MCF 10A (cell line): ENCODE measurements at regions of chr19 and their contacts with region 1.

Region 1: DNA sequence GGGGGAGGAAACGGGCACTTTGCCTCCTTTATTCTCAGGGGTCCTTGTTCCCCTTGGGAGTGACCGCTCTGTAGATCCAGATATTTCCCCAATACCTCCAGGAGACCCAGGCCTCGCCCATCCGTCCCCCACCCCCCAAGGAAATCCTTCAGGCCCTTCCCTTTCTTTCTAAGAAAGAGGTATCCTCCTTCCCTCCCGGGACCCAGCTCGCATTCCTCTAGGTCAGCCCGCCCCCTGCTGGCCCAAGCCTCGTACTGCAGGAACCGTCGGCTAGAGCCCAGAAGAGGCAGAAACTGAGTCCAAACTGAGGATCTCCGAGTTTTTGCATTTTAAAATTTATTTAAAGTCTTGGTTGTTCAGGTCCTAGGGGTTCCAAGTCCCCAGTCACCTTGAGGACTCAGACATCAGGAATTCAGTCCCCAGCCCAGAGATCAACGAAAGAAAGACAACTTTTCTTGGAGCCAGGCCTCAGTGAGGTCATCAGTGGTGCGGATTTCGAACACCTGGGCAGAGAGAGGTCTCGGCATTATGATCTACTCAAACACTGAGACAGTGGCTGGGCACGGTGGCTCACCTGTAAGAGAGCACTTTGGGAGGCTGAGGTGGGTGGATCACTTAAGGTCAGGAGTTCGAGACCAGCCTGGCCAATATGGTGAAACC is 7.5 kb upstream of the LRFN1 start:
- DNase-seq: peak; percentile 80
- H3K4me3 Mint-ChIP-seq: no peak overlapping the region
- H3K27ac Mint-ChIP-seq: no peak overlapping the region
- H3K4me1 Mint-ChIP-seq: no peaks in the 10 kb centered on the region
- H3K27me3 Mint-ChIP-seq: no peaks in the 10 kb centered on the region
- CTCF ChIP-seq: peak; percentile 95

Region 2: DNA sequence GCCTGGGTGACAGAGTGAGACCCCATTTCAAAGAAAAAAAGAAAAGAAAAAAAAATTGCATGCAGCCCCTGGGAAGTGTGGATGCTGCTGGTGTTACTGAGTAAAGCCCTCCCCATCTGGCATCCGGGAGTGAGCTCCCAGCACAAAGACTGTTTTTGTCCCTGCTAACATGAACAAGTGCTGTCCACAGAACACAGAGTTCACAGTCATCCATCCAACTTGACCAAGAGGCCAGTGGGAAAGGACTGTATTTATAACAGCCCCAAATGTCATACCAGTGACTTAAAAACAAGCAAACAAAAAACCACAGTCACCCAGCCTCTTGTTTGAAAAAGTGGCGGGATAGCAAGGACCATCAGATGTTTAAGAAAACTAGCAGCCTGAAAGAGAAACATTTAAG is 363.4 kb before region 1 on chr19:
- CTCF ChIA-PET with region 1: interaction called, 8 read pairs
- POLR2A ChIA-PET with region 1: interaction called, 3 read pairs
- intact Hi-C with region 1: loop called (anchors 1 kb)
- DNase-seq: no peak
- H3K4me3 Mint-ChIP-seq: no peak overlapping the region
- H3K27ac Mint-ChIP-seq: no peak overlapping the region
- H3K4me1 Mint-ChIP-seq: peaks cover 5% of the 10 kb centered on the region
- H3K27me3 Mint-ChIP-seq: no peaks in the 10 kb centered on the region
- CTCF ChIP-seq: no peak

Region 3: GRCh38 chr19:39052243-39052746 is 275.9 kb before region 1 on chr19:
- CTCF ChIA-PET with region 1: interaction called, 3 read pairs
- POLR2A ChIA-PET with region 1: no interaction called
- intact Hi-C with region 1: loop called (anchors 1 kb)
- DNase-seq: peak; percentile 62
- H3K4me3 Mint-ChIP-seq: no peak overlapping the region
- H3K27ac Mint-ChIP-seq: no peak overlapping the region
- H3K4me1 Mint-ChIP-seq: no peaks in the 10 kb centered on the region
- H3K27me3 Mint-ChIP-seq: no peaks in the 10 kb centered on the region
- CTCF ChIP-seq: peak; percentile 90

Region 4: DNA sequence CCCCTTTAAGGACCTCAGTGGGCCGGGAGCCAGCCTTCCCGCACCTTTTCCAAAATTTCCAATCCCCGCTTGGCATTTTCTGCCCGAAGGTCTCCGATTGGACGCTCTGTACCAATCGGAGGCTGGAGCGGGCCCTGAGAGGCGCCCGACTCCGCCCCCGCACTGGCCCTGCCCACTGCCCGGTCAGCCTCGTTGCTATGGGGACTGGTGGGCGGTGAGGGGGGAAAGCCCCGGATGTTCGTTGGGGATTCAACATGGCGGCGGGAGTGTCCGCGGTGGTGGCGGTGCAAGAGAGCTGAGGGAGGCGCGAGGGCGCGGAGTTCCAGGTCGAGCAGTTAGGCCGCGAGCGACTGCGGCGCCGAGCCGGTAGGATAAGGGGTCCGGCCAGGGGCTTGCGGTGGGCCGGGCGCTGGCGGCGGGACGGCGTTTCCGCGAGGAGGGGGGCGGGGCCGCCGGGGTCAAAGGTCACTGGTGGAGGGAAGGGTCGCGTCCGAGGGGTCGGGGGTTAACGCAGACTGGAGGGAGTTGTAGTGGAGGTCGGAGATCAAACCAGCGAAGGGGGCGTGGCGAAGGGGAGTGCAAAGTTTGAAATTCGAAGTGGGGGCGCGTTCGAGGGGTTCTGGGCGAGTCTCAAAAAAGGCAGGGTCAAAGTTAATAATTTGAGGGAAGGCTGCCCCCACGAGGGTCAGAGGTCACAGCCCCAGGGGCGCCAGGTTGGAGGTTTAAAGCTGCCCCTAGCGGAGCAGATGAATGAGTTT is 202.4 kb before region 1 on chr19 and contains the start of gene PAK4:
- CTCF ChIA-PET with region 1: interaction called, 50 read pairs
- POLR2A ChIA-PET with region 1: interaction called, 8 read pairs
- intact Hi-C with region 1: loop called (anchors 1 kb)
- DNase-seq: peak; percentile 99
- H3K4me3 Mint-ChIP-seq: peak within 1 kb of the TSS; percentile 87
- H3K27ac Mint-ChIP-seq: peak within 1 kb of the TSS; percentile 89
- H3K4me1 Mint-ChIP-seq: peaks cover 24% of the 10 kb centered on the region
- H3K27me3 Mint-ChIP-seq: no peaks in the 10 kb centered on the region
- CTCF ChIP-seq: no peak
- total RNA-seq, gene PAK4: 28.4 and 29.5 TPM in 2 replicates

Region 5: GRCh38 chr19:39199025-39199424 is 129.2 kb before region 1 on chr19:
- CTCF ChIA-PET with region 1: no interaction called
- POLR2A ChIA-PET with region 1: no interaction called
- intact Hi-C with region 1: loop called (anchors 10 kb)
- DNase-seq: no peak
- H3K4me3 Mint-ChIP-seq: no peak overlapping the region
- H3K27ac Mint-ChIP-seq: no peak overlapping the region
- H3K4me1 Mint-ChIP-seq: peaks cover 17% of the 10 kb centered on the region
- H3K27me3 Mint-ChIP-seq: peaks cover 62% of the 10 kb centered on the region
- CTCF ChIP-seq: no peak

Region 6: DNA sequence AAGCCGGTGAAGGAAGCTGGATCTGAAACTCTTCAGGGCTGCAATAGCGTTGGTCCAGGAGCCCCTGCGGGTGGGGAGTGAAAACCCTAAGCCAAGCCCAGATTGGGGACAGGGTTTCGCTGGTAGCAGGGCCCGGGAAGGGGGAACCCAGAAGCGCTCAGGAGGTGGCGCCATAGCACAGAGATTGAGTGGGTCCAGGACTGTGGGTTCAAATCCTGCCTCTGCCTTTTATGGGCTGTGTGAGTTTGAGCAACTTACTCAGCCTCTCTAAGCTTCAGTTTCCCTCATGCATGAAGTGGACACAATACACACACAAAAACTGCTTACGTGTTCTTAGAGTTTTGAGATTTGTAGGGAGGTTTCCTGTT is 115.8 kb before region 1 on chr19:
- CTCF ChIA-PET with region 1: interaction called, 3 read pairs
- POLR2A ChIA-PET with region 1: no interaction called
- intact Hi-C with region 1: loop called (anchors 1 kb)
- DNase-seq: peak; percentile 34
- H3K4me3 Mint-ChIP-seq: no peak overlapping the region
- H3K27ac Mint-ChIP-seq: no peak overlapping the region
- H3K4me1 Mint-ChIP-seq: no peaks in the 10 kb centered on the region
- H3K27me3 Mint-ChIP-seq: no peaks in the 10 kb centered on the region
- CTCF ChIP-seq: no peak

Region 7: DNA sequence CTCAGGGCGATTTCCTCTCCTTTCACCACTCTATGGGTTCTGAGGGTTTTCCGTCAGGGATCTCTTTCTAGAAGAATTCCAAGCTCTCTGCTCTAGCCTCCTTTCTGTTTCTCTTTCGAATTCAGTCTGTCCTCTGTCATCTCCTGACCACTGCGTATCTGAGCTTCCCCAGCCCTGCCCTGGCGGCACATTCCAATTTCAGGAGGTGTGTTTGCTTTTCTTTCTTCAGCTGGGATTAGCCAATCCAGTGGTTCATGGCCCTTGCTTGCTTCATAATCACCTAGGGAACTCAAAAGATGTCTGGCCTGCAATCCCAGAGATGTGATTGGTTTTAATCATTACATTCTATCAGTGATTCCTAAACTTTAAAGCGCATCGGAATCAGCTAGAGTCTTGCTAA is 50.6 kb before region 1 on chr19:
- CTCF ChIA-PET with region 1: no interaction called
- POLR2A ChIA-PET with region 1: no interaction called
- intact Hi-C with region 1: no loop called
- DNase-seq: peak; percentile 27
- H3K4me3 Mint-ChIP-seq: no peak overlapping the region
- H3K27ac Mint-ChIP-seq: no peak overlapping the region
- H3K4me1 Mint-ChIP-seq: peaks cover 6% of the 10 kb centered on the region
- H3K27me3 Mint-ChIP-seq: peaks cover 48% of the 10 kb centered on the region
- CTCF ChIP-seq: no peak

Region 8: DNA sequence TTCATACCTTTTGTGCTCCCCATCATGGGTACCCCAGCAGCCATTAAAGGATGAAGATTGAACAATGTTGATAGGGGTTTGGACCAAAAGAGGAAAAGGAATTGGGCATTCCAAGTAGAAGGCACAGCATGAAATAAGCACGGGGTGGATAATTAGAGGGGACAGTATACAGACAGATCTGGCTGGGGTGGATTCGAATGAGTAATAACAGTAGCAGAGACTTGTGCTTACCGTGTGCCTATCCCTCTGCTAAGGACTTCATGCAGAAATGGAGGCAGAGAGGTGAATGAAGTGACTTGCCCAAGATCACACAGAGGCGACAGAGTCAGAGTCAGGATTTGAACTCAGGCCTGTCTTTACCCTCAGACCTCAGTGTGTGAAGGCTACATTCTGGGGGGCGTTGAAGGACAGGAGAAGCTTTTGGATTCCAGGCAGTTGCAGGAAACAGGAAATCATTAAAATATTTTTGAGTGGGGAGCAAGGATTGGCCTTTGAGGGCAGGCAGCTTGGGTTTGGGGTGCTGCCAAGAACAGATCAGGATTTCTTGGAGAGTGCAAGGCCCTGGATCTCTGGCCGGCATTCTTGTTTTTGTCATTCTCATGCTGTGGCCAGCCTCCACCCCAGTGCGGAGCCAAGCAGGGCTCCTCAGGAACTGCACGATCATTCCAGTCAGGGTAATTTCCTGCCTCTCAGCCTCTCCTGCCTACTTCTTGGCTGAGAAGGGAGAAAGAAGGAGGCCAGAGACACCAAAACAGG is 44.0 kb after region 1 on chr19:
- CTCF ChIA-PET with region 1: no interaction called
- POLR2A ChIA-PET with region 1: no interaction called
- intact Hi-C with region 1: no loop called
- DNase-seq: peak; percentile 47
- H3K4me3 Mint-ChIP-seq: no peak overlapping the region
- H3K27ac Mint-ChIP-seq: no peak overlapping the region
- H3K4me1 Mint-ChIP-seq: no peaks in the 10 kb centered on the region
- H3K27me3 Mint-ChIP-seq: no peaks in the 10 kb centered on the region
- CTCF ChIP-seq: no peak

Region 9: GRCh38 chr19:39382991-39383828 is 55.0 kb after region 1 on chr19:
- CTCF ChIA-PET with region 1: no interaction called
- POLR2A ChIA-PET with region 1: no interaction called
- intact Hi-C with region 1: no loop called
- DNase-seq: no peak
- H3K4me3 Mint-ChIP-seq: no peak overlapping the region
- H3K27ac Mint-ChIP-seq: peak overlapping the region; percentile 71
- H3K4me1 Mint-ChIP-seq: peaks cover 7% of the 10 kb centered on the region
- H3K27me3 Mint-ChIP-seq: no peaks in the 10 kb centered on the region
- CTCF ChIP-seq: no peak